Left ventricle myocardium inferior (tissue), 1 donor: ENCODE measurements at regions of chr3 and their contacts with region 1.

Region 1: DNA sequence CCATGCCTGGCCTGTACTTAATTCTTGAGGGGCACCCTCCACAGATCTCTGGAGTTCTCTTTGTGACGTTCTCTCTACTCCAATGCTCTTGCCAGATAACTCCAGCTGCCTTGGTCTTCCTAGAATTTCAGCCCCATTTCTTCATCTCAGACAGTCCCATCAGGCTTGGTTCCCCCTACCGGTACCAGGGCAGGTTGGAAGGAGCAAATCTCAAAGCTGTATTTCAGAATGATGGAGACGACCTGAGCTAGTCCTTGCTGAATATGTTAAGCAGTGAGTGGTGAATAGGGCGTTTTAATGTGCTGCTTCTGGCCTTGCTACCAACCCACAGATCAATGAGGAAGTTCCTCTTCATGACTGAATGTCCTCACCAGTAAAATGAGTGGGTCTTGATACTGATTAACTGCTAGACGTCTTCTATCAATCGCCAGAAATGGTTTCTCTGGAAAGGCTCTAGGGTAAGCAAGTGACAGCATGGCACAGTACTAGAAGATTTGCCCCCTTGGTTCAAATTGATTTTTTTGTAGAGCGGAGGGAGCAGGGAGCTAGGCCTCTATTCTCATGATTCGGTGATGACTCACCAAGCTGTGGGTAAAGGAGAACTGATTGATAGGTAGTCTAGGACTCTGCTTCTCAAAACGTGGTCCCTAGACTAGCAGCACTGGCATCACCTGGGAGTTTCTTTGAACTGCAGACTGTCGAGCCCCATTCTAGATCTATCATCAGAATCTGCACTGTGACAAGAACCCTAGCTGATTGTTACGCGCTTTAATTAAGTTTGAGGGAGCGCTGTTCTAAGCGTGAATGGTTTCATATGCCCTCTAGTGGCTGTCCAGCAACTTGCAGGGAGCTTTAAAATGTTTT is 67.8 kb downstream of the UBP1 start:
- DNase-seq: no peak
- H3K4me3 ChIP-seq: no peak overlapping the region
- H3K27ac ChIP-seq: no peak overlapping the region
- H3K4me1 ChIP-seq: peaks cover 4% of the 10 kb centered on the region
- H3K27me3 ChIP-seq: no peaks in the 10 kb centered on the region
- CTCF ChIP-seq: peak; percentile 95

Region 2: DNA sequence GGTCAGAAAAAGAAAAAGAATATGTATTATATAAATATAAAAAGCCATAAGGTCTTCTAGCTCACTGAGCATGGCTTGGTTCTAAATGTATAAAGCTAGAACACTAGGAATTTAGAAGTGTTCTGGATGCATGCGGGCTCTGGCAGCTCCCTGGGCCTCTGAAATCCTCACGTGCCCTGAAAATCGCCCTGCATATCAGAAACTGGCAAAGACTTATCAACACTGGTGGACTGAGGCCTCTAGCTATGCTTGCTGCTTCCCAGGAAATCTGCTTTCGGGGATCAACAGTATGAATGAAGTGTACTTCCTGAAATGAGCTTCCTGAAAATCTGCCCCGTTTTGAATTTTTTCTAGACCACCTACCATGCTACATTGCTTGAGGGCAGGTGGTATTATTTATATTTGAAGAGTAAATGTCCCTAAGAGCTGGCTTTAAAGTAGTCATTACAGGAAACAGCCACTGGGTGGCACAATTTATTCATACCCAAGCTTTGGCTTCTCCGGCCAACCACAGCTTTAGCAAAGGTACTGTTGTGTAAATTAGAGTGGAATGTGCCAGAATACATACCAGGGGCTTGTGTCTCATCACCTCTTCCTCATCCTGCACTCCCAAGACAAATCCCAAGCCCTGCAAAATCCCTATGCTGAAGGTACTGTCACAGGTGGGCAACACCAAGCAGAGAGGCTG is 241.0 kb before region 1 on chr3:
- intact Hi-C with region 1: loop called (anchors 5 kb)
- DNase-seq: no peak
- H3K4me3 ChIP-seq: no peak overlapping the region
- H3K27ac ChIP-seq: no peak overlapping the region
- H3K4me1 ChIP-seq: peaks cover 11% of the 10 kb centered on the region
- H3K27me3 ChIP-seq: no peaks in the 10 kb centered on the region
- CTCF ChIP-seq: peak; percentile 79